MCF 10A (cell line): ENCODE measurements at regions of chr11 and their contacts with region 1.

Region 1: GRCh38 chr11:129922674-129923073 is 27.3 kb upstream of the NFRKB start:
- DNase-seq: no peak
- H3K4me3 Mint-ChIP-seq: no peak overlapping the region
- H3K27ac Mint-ChIP-seq: no peak overlapping the region
- H3K4me1 Mint-ChIP-seq: peaks cover 5% of the 10 kb centered on the region
- H3K27me3 Mint-ChIP-seq: no peaks in the 10 kb centered on the region
- CTCF ChIP-seq: no peak

Region 2: DNA sequence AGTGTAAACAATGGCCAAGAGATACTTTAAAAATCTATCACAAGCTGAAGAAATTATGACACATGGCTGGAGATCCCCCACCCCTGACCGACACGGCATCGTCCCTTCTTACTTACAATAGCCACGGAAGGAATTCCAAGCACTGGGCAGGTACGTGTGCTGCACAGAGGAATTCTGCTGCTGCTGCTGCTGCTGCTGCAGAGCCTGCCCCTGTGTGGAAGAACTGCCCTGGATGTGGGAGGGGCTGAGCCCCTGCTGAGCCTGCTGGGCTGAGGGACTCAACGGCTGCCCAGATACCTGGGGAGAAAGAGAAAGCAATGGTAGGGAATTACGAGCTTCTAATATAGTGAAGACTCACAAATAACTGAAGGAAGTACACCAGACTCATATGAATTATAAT is 12.3 kb before region 1 on chr11:
- CTCF ChIA-PET with region 1: interaction called, 10 read pairs
- POLR2A ChIA-PET with region 1: interaction called, 5 read pairs
- intact Hi-C with region 1: no loop called
- DNase-seq: no peak
- H3K4me3 Mint-ChIP-seq: no peak overlapping the region
- H3K27ac Mint-ChIP-seq: no peak overlapping the region
- H3K4me1 Mint-ChIP-seq: no peaks in the 10 kb centered on the region
- H3K27me3 Mint-ChIP-seq: no peaks in the 10 kb centered on the region
- CTCF ChIP-seq: no peak